H1 (cell line): ENCODE measurements at regions of chr19 and their contacts with region 1.

Region 1: GRCh38 chr19:15456871-15457700 is 7.3 kb downstream of the RASAL3 start:
- DNase-seq: peak; percentile 74 to 91
- H3K4me3 ChIP-seq: peak overlapping the region; percentile 24 to 61 (median 36)
- H3K27ac ChIP-seq: no peak overlapping the region
- H3K4me1 ChIP-seq: peaks cover 0 to 17% (median 10%) of the 10 kb centered on the region in 4 experiments; a peak in 5 of 7 replicates
- H3K27me3 ChIP-seq: peaks cover 20 to 69% (median 55%) of the 10 kb centered on the region in 4 experiments
- CTCF ChIP-seq: no peak
- EP300 ChIP-seq: no peak
- POLR2A ChIP-seq: no peak
- RAD21 ChIP-seq: no peak

Region 2: GRCh38 chr19:15404097-15404779 is 52.8 kb before region 1 on chr19:
- CTCF ChIA-PET with region 1: no interaction called
- POLR2A ChIA-PET with region 1: no interaction called
- DNase-seq: no peak
- H3K4me3 ChIP-seq: no peak overlapping the region
- H3K27ac ChIP-seq: no peak overlapping the region
- H3K4me1 ChIP-seq: no peaks in the 10 kb centered on the region
- H3K27me3 ChIP-seq: no peaks in the 10 kb centered on the region
- CTCF ChIP-seq: no peak
- EP300 ChIP-seq: no peak
- POLR2A ChIP-seq: no peak
- RAD21 ChIP-seq: no peak

Region 3: DNA sequence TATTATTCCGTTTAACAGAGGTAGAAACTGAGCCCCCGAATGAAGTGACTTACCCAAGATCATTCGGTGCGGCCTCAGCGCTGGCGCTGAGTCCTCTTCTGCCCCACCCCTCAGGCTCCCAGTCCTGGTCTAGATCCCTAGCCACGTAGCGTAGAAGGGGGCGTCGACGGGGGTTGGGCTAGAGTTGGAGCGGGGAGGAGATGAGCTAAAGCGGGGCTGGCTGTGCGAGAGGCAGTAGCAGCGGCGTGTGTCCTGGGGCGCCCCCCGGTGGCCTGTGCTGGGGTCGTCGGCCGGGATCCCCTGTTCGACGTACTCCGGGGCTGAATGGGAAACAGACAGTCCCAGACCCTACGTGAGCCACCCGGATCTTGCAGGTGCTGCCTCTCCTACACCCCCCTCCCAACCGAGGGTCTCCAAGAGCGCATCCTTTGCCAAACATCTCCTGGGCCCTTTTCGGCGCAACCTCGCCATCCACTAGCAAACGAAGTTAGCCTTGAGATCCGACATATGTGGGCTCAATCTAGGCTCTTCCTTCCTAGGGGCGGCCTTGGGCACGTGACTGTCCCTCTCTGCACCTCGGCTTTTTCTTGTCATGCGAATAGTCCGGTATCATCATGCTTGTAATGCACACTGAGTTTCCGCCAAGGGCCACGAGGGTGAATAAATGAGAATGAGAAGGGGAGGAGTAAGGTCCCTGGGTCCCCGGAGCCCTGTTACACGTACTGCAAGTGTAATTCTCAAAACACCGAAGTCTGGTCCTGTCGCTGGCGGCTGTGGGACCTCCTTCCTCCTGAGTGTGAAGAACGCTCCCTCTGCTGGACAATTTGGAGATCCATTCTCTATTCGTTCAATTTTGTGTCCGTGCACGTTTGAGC is 98.9 kb after region 1 on chr19:
- CTCF ChIA-PET with region 1: interaction called, 11 read pairs
- POLR2A ChIA-PET with region 1: no interaction called
- DNase-seq: peak; percentile 77 to 99
- H3K4me3 ChIP-seq: peak overlapping the region in 3 of 4 experiments; percentile 33 to 48 (median 37); a peak in 5 of 8 replicates
- H3K27ac ChIP-seq: no peak overlapping the region
- H3K4me1 ChIP-seq: no peaks in the 10 kb centered on the region
- H3K27me3 ChIP-seq: peaks cover 0 to 2% (median 0%) of the 10 kb centered on the region in 4 experiments; a peak in 2 of 7 replicates
- CTCF ChIP-seq: peak; percentile 80 to 91 (median 86)
- EP300 ChIP-seq: no peak
- POLR2A ChIP-seq: no peak
- RAD21 ChIP-seq: peak; percentile 88 to 89